ENCODE measurements at regions of chr16 and their contacts with region 1.

Region 1: GRCh38 chr16:23283571-23283970 is 18.5 kb upstream of the SCNN1B start:
- DNase-seq: peak in 1 of 2 experiments; percentile 73
- H3K4me3 ChIP-seq: no peak overlapping the region
- H3K27ac ChIP-seq: peak overlapping the region; percentile 31
- H3K4me1 ChIP-seq: peaks cover 91% of the 10 kb centered on the region
- H3K27me3 ChIP-seq: no peaks in the 10 kb centered on the region
- CTCF ChIP-seq: no peak

Region 2: DNA sequence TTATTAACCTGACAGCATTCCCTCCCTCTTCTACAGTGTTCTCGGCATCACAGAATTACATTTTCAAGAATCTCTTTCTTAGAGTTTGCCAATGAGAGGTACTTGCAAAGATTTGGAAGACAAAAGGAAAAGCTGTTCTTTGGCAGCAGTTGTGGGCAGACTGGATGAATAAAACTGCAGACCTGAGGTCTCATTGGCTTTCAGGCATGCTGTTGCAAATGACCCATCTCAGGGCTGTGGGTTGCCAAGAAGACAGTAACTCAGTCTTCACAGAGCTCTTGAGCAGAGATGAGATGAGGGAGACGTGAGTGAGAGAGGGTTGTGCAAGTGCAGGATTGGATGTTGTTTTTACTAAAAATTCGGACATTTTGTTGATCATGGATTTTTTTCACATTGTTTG is 123.0 kb before region 1 on chr16:
- CTCF ChIA-PET with region 1: no interaction called
- POLR2A ChIA-PET with region 1: no interaction called
- intact Hi-C with region 1: no loop called
- DNase-seq: no peak
- H3K4me3 ChIP-seq: no peak overlapping the region
- H3K27ac ChIP-seq: no peak overlapping the region
- H3K4me1 ChIP-seq: no peaks in the 10 kb centered on the region
- H3K27me3 ChIP-seq: 0 out of 2 replicates have a peak, but pooled peaks cover 5% of the 10 kb centered on the region
- CTCF ChIP-seq: no peak

Region 3: DNA sequence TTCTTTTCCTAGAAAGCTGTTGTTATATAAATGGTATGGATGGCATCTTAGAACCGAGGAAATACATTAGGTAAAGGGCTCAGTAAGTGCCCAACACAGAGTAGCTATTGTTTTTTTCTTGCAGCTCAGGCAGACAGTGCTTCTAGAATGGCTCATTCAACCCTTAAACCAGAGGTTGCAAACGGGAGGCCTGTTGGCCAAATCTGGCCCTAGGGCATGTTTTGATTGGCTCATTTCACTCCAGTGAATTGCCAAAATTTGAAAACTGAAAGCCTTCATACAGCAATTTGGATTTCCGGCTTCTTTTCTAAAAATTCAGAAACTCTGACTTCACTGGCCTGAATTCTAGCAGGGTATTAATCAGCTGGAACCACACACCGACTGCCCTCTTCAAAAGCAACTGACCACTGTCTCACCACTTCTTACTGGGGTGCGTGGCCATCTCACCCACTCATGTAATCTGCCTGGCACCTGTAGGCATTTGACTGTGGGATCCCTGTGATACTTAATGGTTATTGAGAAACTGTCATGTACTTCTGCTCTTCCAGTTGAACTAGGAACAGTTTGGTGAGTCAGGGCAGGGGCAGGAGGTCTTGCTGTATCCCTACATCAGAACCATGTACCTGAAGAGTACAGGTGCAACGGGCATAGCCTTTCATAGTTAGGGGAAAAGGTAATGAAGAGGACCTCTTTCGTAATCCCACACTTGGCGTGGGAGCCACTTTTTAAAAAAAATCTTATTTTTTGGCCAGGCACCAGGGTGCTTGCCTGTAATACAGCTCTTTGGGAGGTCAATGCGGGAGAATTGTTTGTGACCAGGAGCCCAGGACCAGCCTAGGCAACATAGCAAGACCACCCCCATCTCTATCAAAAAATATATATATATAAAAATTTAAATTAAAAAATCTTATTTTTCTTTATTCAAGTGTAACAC is 35.0 kb before region 1 on chr16:
- CTCF ChIA-PET with region 1: no interaction called
- POLR2A ChIA-PET with region 1: interaction called, 14 read pairs
- intact Hi-C with region 1: no loop called
- DNase-seq: peak in 1 of 2 experiments; percentile 65
- H3K4me3 ChIP-seq: no peak overlapping the region
- H3K27ac ChIP-seq: peak overlapping the region; percentile 13; the same call in 1 of the 2 replicates
- H3K4me1 ChIP-seq: peaks cover 12% of the 10 kb centered on the region
- H3K27me3 ChIP-seq: no peaks in the 10 kb centered on the region
- CTCF ChIP-seq: no peak

Measured in PC-9 (cell line).